ENCODE measurements at regions of chr3 and their contacts with region 1.

Region 1: GRCh38 chr3:124941771-124942170 is 7.2 kb upstream of the MUC13 start:
- DNase-seq: no peak
- H3K4me3 ChIP-seq: no peak overlapping the region
- H3K27ac ChIP-seq: no peak overlapping the region
- H3K4me1 ChIP-seq: no peaks in the 10 kb centered on the region
- H3K27me3 ChIP-seq: no peaks in the 10 kb centered on the region
- CTCF ChIP-seq: no peak

Region 2: DNA sequence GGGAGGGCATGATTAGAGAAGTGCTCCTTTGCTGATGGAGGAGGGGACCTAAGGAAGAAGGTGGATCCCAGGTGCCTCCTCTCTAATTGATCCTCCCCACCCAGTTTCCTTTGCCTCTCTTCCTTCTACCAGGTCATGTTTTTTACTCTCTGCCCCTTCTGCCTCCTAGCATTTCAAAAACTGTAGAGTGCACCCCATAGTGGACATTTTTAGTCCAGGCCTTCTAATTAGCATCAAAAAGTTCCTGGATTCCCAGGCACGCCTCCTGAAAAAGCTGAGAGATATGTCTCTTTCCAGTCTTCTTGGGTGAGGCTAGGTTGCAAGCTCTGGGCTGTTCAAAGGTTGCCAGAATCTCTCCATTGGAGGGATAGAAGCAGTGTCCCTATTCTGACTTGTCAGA is 35.9 kb before region 1 on chr3:
- CTCF ChIA-PET with region 1: no interaction called
- dilution Hi-C with region 1: no loop called
- in situ Hi-C with region 1: no loop called
- intact Hi-C with region 1: no loop called
- DNase-seq: no peak
- H3K4me3 ChIP-seq: no peak overlapping the region
- H3K27ac ChIP-seq: no peak overlapping the region
- H3K4me1 ChIP-seq: no peaks in the 10 kb centered on the region
- H3K27me3 ChIP-seq: no peaks in the 10 kb centered on the region
- CTCF ChIP-seq: peak in 1 of 2 donors; percentile 1

Region 3: GRCh38 chr3:125186261-125186787 is 244.6 kb after region 1 on chr3:
- CTCF ChIA-PET with region 1: no interaction called
- dilution Hi-C with region 1: loop called (anchors 10 kb)
- in situ Hi-C with region 1: no loop called
- intact Hi-C with region 1: no loop called
- DNase-seq: no peak
- H3K4me3 ChIP-seq: no peak overlapping the region
- H3K27ac ChIP-seq: no peak overlapping the region
- H3K4me1 ChIP-seq: no peaks in the 10 kb centered on the region
- H3K27me3 ChIP-seq: no peaks in the 10 kb centered on the region
- CTCF ChIP-seq: no peak